Naive thymus-derived CD8-positive, alpha-beta T cell (primary cell): ENCODE measurements at regions of chr1 and their contacts with region 1.

Region 1: DNA sequence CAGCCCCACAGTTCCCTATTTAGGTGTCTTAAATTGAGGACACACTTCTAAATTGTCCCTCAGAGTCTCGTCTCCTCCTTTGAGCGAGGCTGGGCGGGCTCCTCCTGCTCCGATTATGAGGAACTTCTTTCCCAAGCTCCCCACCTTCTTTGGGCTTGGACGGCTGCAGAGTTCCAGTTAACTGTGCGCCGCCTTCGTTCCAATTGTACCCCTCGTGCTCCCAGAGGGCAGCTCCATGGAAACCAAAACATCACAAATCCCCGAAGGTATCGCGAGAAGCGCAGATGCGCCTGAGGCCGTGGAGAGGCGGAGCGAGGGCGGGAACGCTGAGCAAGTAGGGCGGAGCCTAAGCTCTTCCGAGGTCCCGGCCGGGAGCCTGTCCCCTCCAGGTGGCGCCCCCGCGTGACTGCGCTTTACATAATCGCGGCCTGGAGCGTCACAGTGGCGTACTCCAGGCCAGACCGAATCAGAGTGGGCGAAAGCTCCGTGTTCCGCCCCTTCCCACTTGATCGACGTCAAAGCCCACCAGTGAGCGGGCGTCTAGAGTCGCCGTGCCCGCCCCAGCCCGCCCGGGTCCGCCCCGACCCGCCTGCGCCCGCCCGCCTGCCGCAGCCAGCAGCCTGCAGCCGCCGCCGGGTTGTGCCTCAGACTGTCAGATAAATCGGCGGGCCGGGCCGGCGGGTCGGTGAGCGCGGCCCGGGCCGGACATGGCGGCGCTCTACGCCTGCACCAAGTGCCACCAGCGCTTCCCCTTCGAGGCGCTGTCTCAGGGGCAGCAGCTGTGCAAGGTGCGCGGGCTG is at the start of gene FAM76A:
- DNase-seq: peak; percentile 98 to 100 (median 100)
- ATAC-seq: peak; percentile 88 to 91
- H3K4me3 Mint-ChIP-seq: peak within 1 kb of the TSS; percentile 84 to 95 (median 91)
- H3K27ac Mint-ChIP-seq: peak within 1 kb of the TSS; percentile 88 to 100 (median 99)
- H3K4me1 Mint-ChIP-seq: peaks cover 12 to 33% (median 21%) of the 10 kb centered on the region in 4 donors
- H3K27me3 Mint-ChIP-seq: no peaks in the 10 kb centered on the region
- polyA plus RNA-seq, gene FAM76A: 8.2 to 9.7 (median 9.0) TPM

Region 2: DNA sequence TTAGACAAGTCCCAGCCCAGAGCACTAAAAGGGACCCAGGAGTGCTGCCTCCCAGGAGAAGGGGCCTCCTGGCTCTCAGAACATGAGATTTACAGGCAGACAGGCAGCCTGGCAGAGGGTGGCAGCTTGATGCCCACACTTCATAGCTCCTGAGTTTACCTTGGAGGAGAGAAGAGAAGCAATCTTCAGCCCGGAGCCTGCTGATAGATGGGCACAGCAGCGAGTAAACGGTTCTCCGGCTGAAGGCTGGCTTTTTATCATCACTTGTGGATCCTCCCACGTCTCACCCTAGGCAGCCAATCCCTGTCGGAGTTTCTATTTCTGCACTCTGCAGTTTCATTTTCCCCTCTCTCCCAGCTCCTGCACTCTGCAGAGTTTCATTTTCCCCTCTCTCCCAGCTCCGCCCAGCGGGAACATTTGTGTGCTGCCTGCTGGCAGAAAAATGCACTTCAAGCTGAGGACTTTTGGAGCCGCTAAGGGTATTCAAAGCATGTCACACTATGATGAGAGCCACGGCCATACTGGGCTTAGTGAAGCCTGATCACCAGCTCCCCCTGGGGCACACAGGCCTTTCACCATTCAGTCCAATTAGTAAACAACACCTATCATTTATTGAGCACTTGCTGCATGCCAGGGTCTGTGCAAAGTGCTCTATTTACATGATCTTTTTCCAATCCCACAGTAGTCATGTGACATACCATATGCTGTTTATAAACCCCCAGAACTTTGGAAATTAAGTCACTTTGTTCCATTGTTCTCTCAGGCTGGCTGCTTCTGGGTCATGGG is 53.4 kb before region 1 on chr1 and contains the start of gene IFI6:
- POLR2A ChIA-PET with region 1: interaction called, 16 read pairs
- DNase-seq: peak; percentile 50 to 86 (median 78)
- ATAC-seq: peak; percentile 89 to 94
- H3K4me3 Mint-ChIP-seq: peak within 1 kb of the TSS; percentile 88 to 99 (median 98)
- H3K27ac Mint-ChIP-seq: peak within 1 kb of the TSS; percentile 94 to 99 (median 99)
- H3K4me1 Mint-ChIP-seq: peaks cover 14 to 46% (median 40%) of the 10 kb centered on the region in 4 donors
- H3K27me3 Mint-ChIP-seq: no peaks in the 10 kb centered on the region
- polyA plus RNA-seq, gene IFI6: 145 to 171 (median 146) TPM

Region 3: GRCh38 chr1:27772933-27773825 is 47.6 kb after region 1 on chr1 and contains the start of gene STX12:
- POLR2A ChIA-PET with region 1: interaction called, 34 read pairs
- DNase-seq: peak; percentile 93 to 99 (median 97)
- ATAC-seq: peak; percentile 93 to 94
- H3K4me3 Mint-ChIP-seq: peak within 1 kb of the TSS; percentile 91 to 98 (median 95)
- H3K27ac Mint-ChIP-seq: peak within 1 kb of the TSS; percentile 91 to 99 (median 96)
- H3K4me1 Mint-ChIP-seq: peaks cover 15 to 36% (median 32%) of the 10 kb centered on the region in 4 donors
- H3K27me3 Mint-ChIP-seq: no peaks in the 10 kb centered on the region
- polyA plus RNA-seq, gene STX12: 9.2 to 12.3 (median 10.6) TPM

Region 4: DNA sequence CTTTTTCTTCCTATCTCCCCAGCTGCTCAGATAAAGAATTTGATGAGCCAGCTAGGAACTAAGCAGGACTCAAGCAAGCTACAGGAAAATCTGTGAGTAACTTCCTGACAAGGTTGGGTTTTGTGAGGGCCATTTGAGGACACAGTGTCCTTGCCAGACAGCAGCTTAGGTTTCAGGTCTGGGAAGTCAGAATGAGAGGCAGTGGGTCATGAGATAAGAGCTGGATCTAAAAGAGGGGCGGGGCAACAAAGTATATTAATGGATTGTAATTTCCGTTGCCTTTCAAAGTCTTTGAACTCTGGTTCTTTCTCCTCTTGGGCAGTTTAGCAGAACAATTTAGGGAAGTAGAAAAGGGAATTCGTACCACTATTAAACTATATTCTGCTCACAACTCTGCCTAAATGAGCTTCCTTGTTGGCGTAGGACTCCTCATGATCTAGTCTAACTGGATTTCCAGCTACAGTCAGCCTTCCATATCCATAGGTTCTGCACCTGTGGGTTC is 64.0 kb after region 1 on chr1:
- POLR2A ChIA-PET with region 1: no interaction called
- DNase-seq: no peak
- ATAC-seq: no peak
- H3K4me3 Mint-ChIP-seq: no peak overlapping the region
- H3K27ac Mint-ChIP-seq: peak overlapping the region in 4 of 10 donors; percentile 10 to 68 (median 47)
- H3K4me1 Mint-ChIP-seq: peaks cover 3 to 21% (median 13%) of the 10 kb centered on the region in 4 donors
- H3K27me3 Mint-ChIP-seq: no peaks in the 10 kb centered on the region

Region 5: DNA sequence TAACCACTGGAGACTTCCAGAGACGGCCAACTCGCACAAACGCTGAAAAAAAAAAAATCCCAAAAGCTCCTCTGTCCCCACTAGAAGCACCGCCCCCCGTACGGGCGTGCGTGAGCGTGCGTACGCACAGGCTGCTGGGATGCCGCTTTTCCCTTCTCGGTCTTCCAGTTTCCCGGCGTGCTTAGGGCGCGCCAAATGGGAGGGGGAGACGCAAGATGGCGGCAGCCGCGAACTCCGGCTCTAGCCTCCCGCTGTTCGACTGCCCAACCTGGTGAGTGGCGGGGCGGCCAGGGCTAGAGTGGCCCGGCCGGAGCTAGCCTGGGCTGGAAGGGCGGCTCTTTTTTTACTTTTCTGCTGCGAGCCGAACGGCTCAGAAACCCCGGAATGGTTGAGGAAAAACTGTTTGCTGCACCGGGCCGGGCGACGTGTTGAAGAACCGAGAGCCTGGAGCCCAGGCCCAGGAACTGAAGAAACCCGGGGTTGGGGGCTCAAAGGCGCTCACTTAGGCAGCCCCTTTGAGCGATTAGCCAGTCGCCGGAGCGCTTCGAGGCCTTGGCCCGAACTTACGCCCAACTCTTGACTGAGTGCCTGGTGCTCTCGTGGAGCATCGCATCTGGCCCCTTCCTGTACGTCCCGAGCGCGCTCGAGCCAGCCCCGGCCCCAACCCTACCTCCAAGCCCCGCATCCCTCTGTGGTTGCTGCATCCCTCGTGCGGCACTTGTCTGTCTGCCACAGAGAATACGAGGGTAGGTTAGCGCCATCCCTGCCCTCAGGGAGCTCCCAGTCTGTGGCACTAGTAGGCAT is 105.2 kb after region 1 on chr1 and contains the start of gene PPP1R8:
- POLR2A ChIA-PET with region 1: interaction called, 18 read pairs
- DNase-seq: peak; percentile 77 to 89 (median 85)
- ATAC-seq: peak; percentile 98 to 99
- H3K4me3 Mint-ChIP-seq: peak within 1 kb of the TSS; percentile 88 to 96 (median 92)
- H3K27ac Mint-ChIP-seq: peak within 1 kb of the TSS; percentile 84 to 96 (median 94)
- H3K4me1 Mint-ChIP-seq: peaks cover 8 to 51% (median 35%) of the 10 kb centered on the region in 4 donors
- H3K27me3 Mint-ChIP-seq: no peaks in the 10 kb centered on the region
- polyA plus RNA-seq, gene PPP1R8: 27.8 to 37.8 (median 36.2) TPM